ENCODE measurements at regions of chr9 and their contacts with region 1.

Region 1: GRCh38 chr9:121213136-121213806 is 11.6 kb upstream of the RAB14 start:
- DNase-seq: peak; percentile 78 to 92 (median 82)
- ATAC-seq: peak; percentile 97
- H3K4me3 ChIP-seq: no peak overlapping the region
- H3K27ac ChIP-seq: peak overlapping the region; percentile 64
- H3K4me1 ChIP-seq: peaks cover 0 to 10% of the 10 kb centered on the region in 2 experiments; a peak in 2 of 5 replicates
- H3K27me3 ChIP-seq: no peaks in the 10 kb centered on the region
- CTCF ChIP-seq: peak; percentile 94 to 97 (median 97)
- EP300 ChIP-seq: no peak
- POLR2A ChIP-seq: no peak
- RAD21 ChIP-seq: peak; percentile 95 to 98

Region 2: DNA sequence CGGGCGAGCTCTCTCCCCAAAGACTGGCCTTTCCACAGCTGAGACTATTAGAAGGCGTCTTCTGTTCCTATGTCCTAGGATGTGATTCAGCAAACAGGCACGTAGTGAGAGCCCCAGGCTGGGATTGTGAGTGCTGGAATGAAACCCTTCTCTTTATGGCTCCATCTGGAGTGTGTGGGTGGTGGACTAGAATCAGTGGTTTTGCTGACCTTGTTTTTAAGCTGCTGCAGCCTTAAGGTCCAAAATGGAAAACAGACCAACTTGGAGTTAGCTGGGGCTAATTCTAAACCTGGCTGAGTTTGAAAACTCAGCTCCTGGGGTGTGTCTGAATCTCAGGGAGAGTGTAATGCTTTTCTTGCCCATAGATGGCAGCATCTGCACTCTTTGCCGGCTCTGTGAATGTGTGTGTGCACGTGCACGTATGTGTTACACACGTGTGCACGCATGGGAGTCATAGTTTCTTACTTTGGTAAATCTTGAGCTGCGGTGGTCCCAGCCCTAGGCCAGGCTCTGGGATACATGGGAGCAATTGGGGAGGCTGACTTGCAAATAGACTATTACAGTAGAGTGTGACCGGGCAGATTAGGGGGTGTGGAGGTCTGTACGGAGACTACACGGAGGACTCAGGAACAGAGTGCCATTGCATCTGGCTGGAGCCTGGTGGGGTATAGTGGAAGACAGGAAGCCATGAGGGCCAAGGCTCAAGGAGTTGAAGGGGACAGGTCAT is 65.4 kb after region 1 on chr9:
- CTCF ChIA-PET with region 1: no interaction called
- POLR2A ChIA-PET with region 1: no interaction called
- in situ Hi-C with region 1: no loop called
- intact Hi-C with region 1: loop called (anchors 2 kb)
- DNase-seq: peak; percentile 60 to 81 (median 64)
- ATAC-seq: peak; percentile 90
- H3K4me3 ChIP-seq: no peak overlapping the region
- H3K27ac ChIP-seq: no peak overlapping the region
- H3K4me1 ChIP-seq: peaks cover 32 to 36% of the 10 kb centered on the region in 2 experiments
- H3K27me3 ChIP-seq: no peaks in the 10 kb centered on the region
- CTCF ChIP-seq: peak; percentile 75 to 92 (median 89)
- EP300 ChIP-seq: 0 out of 2 replicates have a peak, but pooled peaks have one; percentile 22
- POLR2A ChIP-seq: no peak
- RAD21 ChIP-seq: peak; percentile 63 to 90

Region 3: GRCh38 chr9:121321016-121321503 is 107.8 kb after region 1 on chr9:
- CTCF ChIA-PET with region 1: interaction called, 5 read pairs
- POLR2A ChIA-PET with region 1: no interaction called
- in situ Hi-C with region 1: loop called (anchors 5 kb)
- intact Hi-C with region 1: loop called (anchors 1 kb)
- DNase-seq: no peak
- ATAC-seq: no peak
- H3K4me3 ChIP-seq: no peak overlapping the region
- H3K27ac ChIP-seq: no peak overlapping the region
- H3K4me1 ChIP-seq: peaks cover 0 to 7% of the 10 kb centered on the region in 2 experiments; a peak in 2 of 5 replicates
- H3K27me3 ChIP-seq: no peaks in the 10 kb centered on the region
- CTCF ChIP-seq: no peak
- EP300 ChIP-seq: no peak
- POLR2A ChIP-seq: no peak
- RAD21 ChIP-seq: no peak

Region 4: DNA sequence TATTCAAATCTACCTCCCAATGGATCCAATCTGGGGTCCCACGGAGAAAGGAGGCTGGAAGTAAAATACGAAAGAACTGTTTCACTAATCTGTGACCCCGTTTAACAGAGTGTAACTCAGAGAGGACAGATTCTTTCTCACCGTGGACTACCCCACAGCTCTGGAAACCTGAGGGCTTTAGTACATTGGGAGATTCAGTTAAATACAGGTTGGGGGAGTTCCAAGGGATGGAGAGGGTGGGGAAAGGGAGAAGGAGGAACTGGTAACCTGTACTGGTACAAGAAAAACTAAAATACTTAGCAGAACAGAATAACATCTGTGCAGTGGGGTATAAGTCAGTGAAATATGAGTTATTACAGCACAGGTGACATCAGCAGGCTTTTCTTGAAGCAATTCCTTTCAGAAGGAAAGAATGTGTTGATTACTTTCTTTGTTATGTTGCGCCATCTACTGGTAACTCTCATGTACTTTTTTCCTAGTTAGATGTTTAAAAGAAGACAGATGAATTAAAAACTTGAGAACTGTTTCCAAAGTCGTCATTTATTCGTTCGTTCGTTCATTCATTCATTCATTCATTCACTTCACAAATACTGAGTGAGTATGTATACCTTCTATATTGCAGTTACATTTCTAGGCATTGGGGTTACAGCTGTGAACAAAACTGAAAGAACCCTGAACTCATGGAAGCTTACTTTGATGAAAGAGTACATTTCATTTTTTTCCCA is 186.8 kb after region 1 on chr9:
- CTCF ChIA-PET with region 1: interaction called, 14 read pairs
- POLR2A ChIA-PET with region 1: interaction called, 3 read pairs
- in situ Hi-C with region 1: loop called (anchors 5 kb)
- intact Hi-C with region 1: loop called (anchors 1 kb)
- DNase-seq: peak; percentile 42 to 77 (median 46)
- ATAC-seq: peak; percentile 79
- H3K4me3 ChIP-seq: no peak overlapping the region
- H3K27ac ChIP-seq: no peak overlapping the region
- H3K4me1 ChIP-seq: peaks cover 0 to 5% of the 10 kb centered on the region in 2 experiments; a peak in 2 of 5 replicates
- H3K27me3 ChIP-seq: no peaks in the 10 kb centered on the region
- CTCF ChIP-seq: peak; percentile 43 to 86 (median 71); a peak in 3 of 6 replicates
- EP300 ChIP-seq: no peak
- POLR2A ChIP-seq: no peak
- RAD21 ChIP-seq: peak; percentile 93 to 96

Region 5: DNA sequence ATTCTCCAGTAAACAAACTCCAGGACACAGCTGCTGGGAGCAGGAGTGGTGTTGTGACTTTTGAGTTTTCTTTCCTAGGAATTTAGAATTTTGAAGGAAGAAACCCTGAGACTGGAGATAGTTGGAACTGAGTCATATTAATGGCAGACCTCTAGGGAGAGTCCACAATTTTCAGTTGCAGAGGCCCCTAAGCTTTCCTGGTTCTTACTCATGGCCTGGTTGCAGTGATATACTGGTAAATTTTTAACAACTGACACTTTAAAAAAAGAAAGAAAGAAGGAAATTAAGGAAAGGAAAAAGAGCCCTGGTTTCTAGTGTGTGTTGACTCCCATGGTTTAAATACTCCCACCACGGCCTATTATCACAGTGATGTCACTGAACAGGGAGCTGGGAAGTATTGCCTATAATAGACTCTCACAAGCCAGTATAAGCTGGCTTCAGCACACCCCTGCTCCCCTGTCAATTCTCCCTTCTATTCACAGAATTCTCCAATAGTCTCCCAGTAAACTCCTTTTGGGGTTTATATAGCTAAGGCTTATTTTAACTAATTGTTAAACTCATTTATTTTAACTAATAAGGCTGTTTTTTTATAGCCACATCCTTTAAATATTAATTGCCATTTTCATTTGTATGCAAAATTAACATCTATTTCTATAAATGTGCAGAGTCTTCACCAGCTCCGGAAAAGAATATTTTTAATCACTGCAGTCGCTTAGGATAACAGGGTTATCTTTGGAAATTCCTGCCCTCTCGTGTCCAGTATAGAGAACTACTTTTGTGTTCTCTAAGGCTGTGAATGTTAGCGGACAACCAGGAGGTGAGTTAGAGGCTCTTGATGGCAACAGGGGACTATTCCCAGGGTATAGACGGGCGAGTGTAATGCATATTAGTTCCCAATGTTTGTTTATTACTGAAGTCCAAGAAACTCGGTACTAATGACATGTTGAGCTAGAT is 226.7 kb after region 1 on chr9:
- CTCF ChIA-PET with region 1: no interaction called
- POLR2A ChIA-PET with region 1: no interaction called
- in situ Hi-C with region 1: no loop called
- intact Hi-C with region 1: loop called (anchors 1 kb)
- DNase-seq: peak; percentile 24 to 58 (median 52)
- ATAC-seq: peak; percentile 91
- H3K4me3 ChIP-seq: no peak overlapping the region
- H3K27ac ChIP-seq: no peak overlapping the region
- H3K4me1 ChIP-seq: no peaks in the 10 kb centered on the region; a peak in 1 of 5 replicates
- H3K27me3 ChIP-seq: no peaks in the 10 kb centered on the region; a peak in 1 of 5 replicates
- CTCF ChIP-seq: peak; percentile 29 to 53 (median 40); a peak in 4 of 6 replicates
- EP300 ChIP-seq: no peak
- POLR2A ChIP-seq: no peak
- RAD21 ChIP-seq: peak; percentile 39 to 45; a peak in 3 of 4 replicates

Region 6: GRCh38 chr9:121538246-121538645 is 325.0 kb after region 1 on chr9:
- CTCF ChIA-PET with region 1: no interaction called
- POLR2A ChIA-PET with region 1: no interaction called
- in situ Hi-C with region 1: no loop called
- intact Hi-C with region 1: loop called (anchors 10 kb)
- DNase-seq: no peak
- ATAC-seq: peak; percentile 42; the same call in 2 of the 3 replicates
- H3K4me3 ChIP-seq: no peak overlapping the region
- H3K27ac ChIP-seq: no peak overlapping the region
- H3K4me1 ChIP-seq: no peaks in the 10 kb centered on the region; a peak in 1 of 5 replicates
- H3K27me3 ChIP-seq: peaks cover 9 to 36% of the 10 kb centered on the region in 2 experiments; a peak in 4 of 5 replicates
- CTCF ChIP-seq: peak in 2 of 3 experiments; percentile 16 to 18; a peak in 2 of 6 replicates
- EP300 ChIP-seq: no peak
- POLR2A ChIP-seq: no peak
- RAD21 ChIP-seq: peak in 1 of 2 experiments; percentile 17; a peak in 1 of 4 replicates